ENCODE measurements at regions of chr2 and their contacts with region 1.

Region 1: DNA sequence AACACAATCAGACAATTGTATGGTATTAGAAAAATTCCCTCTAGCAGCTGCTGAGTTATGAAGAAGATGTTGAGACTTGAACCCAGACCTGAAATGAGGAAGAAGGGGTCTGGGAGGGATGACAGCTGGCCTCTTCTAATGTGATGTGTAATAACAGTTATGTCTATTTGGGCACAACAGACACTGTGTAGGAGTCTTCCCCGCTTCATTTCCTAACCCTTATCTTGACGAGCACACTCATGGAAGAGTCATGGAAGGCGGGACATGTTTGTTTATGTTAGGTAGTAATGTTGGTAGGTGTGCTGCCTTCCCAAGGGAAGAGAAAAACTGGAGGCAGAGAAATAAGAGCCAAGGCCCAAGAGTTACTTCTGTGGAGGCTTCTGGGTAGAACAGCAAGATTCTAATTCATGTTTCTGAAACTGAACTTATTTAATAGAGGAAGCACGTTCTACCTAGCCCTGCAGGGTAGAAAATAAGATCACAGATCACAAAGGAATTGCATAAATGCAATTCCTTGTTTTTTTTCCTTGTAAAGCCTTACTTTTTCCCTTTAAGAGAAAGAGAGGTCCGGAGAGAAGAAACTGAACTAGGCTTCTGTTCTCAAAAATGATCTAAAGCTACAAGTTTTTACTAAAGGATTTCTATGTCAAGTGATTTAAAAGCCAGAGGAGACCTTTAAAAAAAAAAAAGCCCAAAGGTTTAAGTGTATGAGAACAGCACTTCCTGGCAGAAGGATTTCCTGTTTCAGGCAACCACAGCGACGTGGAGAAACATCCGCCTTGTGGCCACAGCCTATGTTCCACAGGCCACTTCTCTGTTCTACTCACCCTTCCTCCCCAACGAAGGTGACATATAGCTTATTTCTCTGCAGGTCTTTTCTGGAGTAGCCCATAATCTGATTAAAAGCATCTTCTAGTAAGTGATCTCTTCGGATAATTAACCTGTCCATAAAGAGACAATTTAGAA is 68.5 kb upstream of the STK17B start:
- DNase-seq: peak; percentile 57 to 95 (median 73)
- ATAC-seq: peak; percentile 80
- H3K4me3 ChIP-seq: peak overlapping the region; percentile 13
- H3K4me3 Mint-ChIP-seq: peak overlapping the region; percentile 83
- H3K27ac ChIP-seq: peak overlapping the region; percentile 54 to 76
- H3K27ac Mint-ChIP-seq: peak overlapping the region; percentile 95
- H3K4me1 ChIP-seq: peaks cover 57% of the 10 kb centered on the region
- H3K4me1 Mint-ChIP-seq: peaks cover 79% of the 10 kb centered on the region
- H3K27me3 ChIP-seq: no peaks in the 10 kb centered on the region
- H3K27me3 Mint-ChIP-seq: no peaks in the 10 kb centered on the region
- CTCF ChIP-seq: no peak

Region 2: GRCh38 chr2:196205881-196206435 is 33.9 kb before region 1 on chr2:
- CTCF ChIA-PET with region 1: interaction called, 5 read pairs
- POLR2A ChIA-PET with region 1: interaction called, 9 read pairs
- intact Hi-C with region 1: loop called in 1 of 2 experiments (anchors 1 kb)
- DNase-seq: no peak
- ATAC-seq: no peak
- H3K4me3 ChIP-seq: no peak overlapping the region
- H3K4me3 Mint-ChIP-seq: no peak overlapping the region
- H3K27ac ChIP-seq: no peak overlapping the region
- H3K27ac Mint-ChIP-seq: peak overlapping the region; percentile 43
- H3K4me1 ChIP-seq: peaks cover 34% of the 10 kb centered on the region
- H3K4me1 Mint-ChIP-seq: peaks cover 45% of the 10 kb centered on the region
- H3K27me3 ChIP-seq: no peaks in the 10 kb centered on the region
- H3K27me3 Mint-ChIP-seq: no peaks in the 10 kb centered on the region
- CTCF ChIP-seq: no peak

Region 3: DNA sequence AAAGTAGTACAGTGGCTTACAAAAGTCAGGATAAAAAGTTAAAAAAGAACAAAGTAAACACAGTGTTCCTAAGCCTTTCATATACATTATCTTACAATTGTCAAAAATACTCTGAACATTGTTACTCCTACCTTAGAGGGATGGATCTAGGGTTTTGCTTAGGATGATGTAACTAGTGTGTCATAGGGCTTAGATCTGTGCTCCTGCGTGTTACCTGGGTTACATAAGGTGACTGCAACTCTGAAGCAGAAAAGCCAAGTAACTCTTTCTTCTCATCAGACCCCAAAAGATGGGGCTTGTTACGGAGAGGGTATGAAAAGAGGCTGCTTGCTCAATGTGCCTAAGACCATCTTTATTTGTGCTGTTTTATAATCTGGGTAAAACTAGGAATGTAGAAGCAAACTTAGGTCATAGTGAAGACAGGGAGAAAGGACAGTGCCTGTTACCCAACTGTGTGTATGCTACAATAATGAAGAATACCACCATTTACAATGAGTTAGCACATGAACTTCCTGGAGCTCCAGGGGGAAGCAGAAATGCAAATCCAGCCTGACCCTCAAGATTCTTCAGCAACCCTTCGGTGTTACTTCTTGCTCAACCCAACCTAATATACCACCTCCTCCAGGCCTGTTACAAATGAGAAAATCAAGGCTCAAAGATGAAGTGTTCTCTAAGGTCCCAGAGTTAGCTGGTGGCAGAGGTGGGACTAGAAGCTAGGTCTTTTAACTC is 26.5 kb before region 1 on chr2:
- CTCF ChIA-PET with region 1: interaction called, 6 read pairs
- POLR2A ChIA-PET with region 1: interaction called, 30 read pairs
- intact Hi-C with region 1: loop called in 1 of 2 experiments (anchors 1 kb)
- DNase-seq: peak in 2 of 14 experiments; percentile 66 to 73
- ATAC-seq: no peak
- H3K4me3 ChIP-seq: no peak overlapping the region
- H3K4me3 Mint-ChIP-seq: peak overlapping the region; percentile 26
- H3K27ac ChIP-seq: peak overlapping the region; percentile 6 to 15
- H3K27ac Mint-ChIP-seq: peak overlapping the region; percentile 95
- H3K4me1 ChIP-seq: peaks cover 45% of the 10 kb centered on the region
- H3K4me1 Mint-ChIP-seq: peaks cover 88% of the 10 kb centered on the region
- H3K27me3 ChIP-seq: no peaks in the 10 kb centered on the region
- H3K27me3 Mint-ChIP-seq: no peaks in the 10 kb centered on the region
- CTCF ChIP-seq: no peak

Region 4: GRCh38 chr2:196263181-196263747 is 23.4 kb after region 1 on chr2:
- CTCF ChIA-PET with region 1: interaction called, 3 read pairs
- POLR2A ChIA-PET with region 1: interaction called, 98 read pairs
- intact Hi-C with region 1: loop called (anchors 1 to 2 kb)
- DNase-seq: peak in 11 of 14 experiments; percentile 14 to 87 (median 42)
- ATAC-seq: peak; percentile 79
- H3K4me3 ChIP-seq: peak overlapping the region; percentile 28
- H3K4me3 Mint-ChIP-seq: peak overlapping the region; percentile 43
- H3K27ac ChIP-seq: peak overlapping the region; percentile 79 to 85
- H3K27ac Mint-ChIP-seq: peak overlapping the region; percentile 84
- H3K4me1 ChIP-seq: peaks cover 48% of the 10 kb centered on the region
- H3K4me1 Mint-ChIP-seq: peaks cover 88% of the 10 kb centered on the region
- H3K27me3 ChIP-seq: no peaks in the 10 kb centered on the region
- H3K27me3 Mint-ChIP-seq: no peaks in the 10 kb centered on the region
- CTCF ChIP-seq: no peak

Measured in CD4-positive, alpha-beta T cell (primary cell).